ENCODE measurements at regions of chr19 and their contacts with region 1.

Region 1: GRCh38 chr19:10000171-10000826 is 10.0 kb downstream of the COL5A3 start:
- DNase-seq: peak; percentile 89
- H3K4me3 ChIP-seq: no peak overlapping the region
- H3K27ac ChIP-seq: no peak overlapping the region
- H3K4me1 ChIP-seq: no peaks in the 10 kb centered on the region; a peak in 1 of 4 replicates
- H3K27me3 ChIP-seq: peaks cover 24% of the 10 kb centered on the region
- CTCF ChIP-seq: peak; percentile 87
- EP300 ChIP-seq: no peak
- RAD21 ChIP-seq: peak; percentile 78

Region 2: DNA sequence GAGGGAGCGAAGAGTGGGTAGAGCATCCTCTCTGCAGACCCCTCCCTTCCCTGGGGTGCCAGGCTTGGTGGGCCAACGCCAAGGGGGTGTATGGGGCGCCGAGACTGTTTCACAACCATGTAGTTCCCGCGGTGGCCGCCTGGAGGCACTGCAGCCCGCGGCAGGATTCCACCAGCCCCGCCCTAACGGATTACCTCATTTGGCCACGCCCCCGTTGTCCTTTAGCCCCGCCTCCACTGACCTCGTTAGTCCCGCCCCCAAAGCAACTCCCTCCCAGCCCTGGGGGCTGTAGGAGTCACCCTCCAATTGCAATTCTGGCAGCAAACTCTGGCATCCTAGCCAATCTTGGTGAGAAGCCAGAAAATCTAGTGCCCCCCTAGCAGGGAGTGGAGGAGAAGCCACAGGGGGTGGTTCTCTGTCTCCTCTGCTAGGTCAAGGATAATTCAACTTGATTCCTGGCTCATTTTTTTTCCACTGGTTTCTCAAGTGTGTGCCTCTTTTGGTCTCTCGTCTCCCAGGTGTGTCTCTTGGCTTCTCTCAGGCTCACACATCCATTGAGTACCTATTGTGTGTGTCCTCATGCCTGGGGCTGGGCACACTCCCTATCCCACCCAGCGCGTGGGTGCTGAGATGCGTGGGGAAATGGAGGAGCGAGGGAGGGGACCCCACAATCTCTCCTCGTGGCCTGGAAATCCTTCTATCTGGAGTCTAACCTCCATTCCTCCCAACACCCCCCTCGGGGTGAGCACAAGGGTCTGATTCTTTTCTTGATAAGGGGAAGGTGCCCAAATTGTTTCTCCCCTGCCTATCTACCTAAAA is 66.0 kb before region 1 on chr19:
- CTCF ChIA-PET with region 1: interaction called, 57 read pairs
- POLR2A ChIA-PET with region 1: no interaction called
- DNase-seq: peak; percentile 92
- H3K4me3 ChIP-seq: peak overlapping the region in 1 of 2 experiments; percentile 30; a peak in 2 of 4 replicates
- H3K27ac ChIP-seq: no peak overlapping the region
- H3K4me1 ChIP-seq: peaks cover 5 to 17% of the 10 kb centered on the region in 2 experiments; a peak in 3 of 4 replicates
- H3K27me3 ChIP-seq: peaks cover 23% of the 10 kb centered on the region; the same call in 1 of the 2 replicates
- CTCF ChIP-seq: peak; percentile 95
- EP300 ChIP-seq: no peak
- RAD21 ChIP-seq: peak; percentile 86

Region 3: GRCh38 chr19:9945319-9945966 is 54.9 kb before region 1 on chr19:
- CTCF ChIA-PET with region 1: interaction called, 14 read pairs
- POLR2A ChIA-PET with region 1: no interaction called
- DNase-seq: peak; percentile 78
- H3K4me3 ChIP-seq: no peak overlapping the region
- H3K27ac ChIP-seq: peak overlapping the region; percentile 22 to 98
- H3K4me1 ChIP-seq: peaks cover 8 to 10% of the 10 kb centered on the region in 2 experiments; a peak in 2 of 4 replicates
- H3K27me3 ChIP-seq: no peaks in the 10 kb centered on the region
- CTCF ChIP-seq: peak; percentile 53
- EP300 ChIP-seq: peak; percentile 53 to 73; a peak in 3 of 4 replicates
- RAD21 ChIP-seq: no peak

Region 4: GRCh38 chr19:9981406-9982260 is 18.7 kb before region 1 on chr19:
- CTCF ChIA-PET with region 1: interaction called, 32 read pairs
- POLR2A ChIA-PET with region 1: no interaction called
- DNase-seq: no peak
- H3K4me3 ChIP-seq: no peak overlapping the region
- H3K27ac ChIP-seq: no peak overlapping the region
- H3K4me1 ChIP-seq: no peaks in the 10 kb centered on the region
- H3K27me3 ChIP-seq: peaks cover 23% of the 10 kb centered on the region
- CTCF ChIP-seq: no peak
- EP300 ChIP-seq: no peak
- RAD21 ChIP-seq: no peak

Region 5: DNA sequence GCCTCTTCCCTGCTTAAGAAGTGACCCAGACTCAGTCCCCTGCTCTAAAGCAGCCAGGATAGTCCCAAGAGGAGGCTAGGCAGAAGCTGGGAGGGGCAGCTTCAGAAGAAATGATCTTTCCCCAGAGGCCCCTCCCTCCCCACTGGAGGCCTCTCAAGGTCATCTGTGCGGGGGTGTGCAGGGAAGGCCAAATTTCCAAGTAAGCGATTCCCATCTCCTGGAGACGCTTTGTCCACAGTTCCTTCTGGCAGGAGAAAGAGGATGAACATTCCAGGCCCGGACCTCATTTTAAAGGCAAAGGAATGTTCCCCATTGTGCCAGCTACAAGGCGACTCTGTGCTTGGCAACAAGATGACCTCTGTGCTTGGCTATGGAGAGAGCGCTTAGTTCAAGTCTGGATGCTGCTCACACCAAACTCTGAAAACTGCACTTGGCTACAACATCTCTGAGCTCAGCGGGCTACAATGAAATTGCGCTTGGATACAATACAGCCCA is 13.5 kb before region 1 on chr19:
- CTCF ChIA-PET with region 1: interaction called, 32 read pairs
- POLR2A ChIA-PET with region 1: no interaction called
- DNase-seq: no peak
- H3K4me3 ChIP-seq: no peak overlapping the region
- H3K27ac ChIP-seq: no peak overlapping the region
- H3K4me1 ChIP-seq: no peaks in the 10 kb centered on the region
- H3K27me3 ChIP-seq: peaks cover 37% of the 10 kb centered on the region
- CTCF ChIP-seq: no peak
- EP300 ChIP-seq: no peak
- RAD21 ChIP-seq: no peak

Region 6: DNA sequence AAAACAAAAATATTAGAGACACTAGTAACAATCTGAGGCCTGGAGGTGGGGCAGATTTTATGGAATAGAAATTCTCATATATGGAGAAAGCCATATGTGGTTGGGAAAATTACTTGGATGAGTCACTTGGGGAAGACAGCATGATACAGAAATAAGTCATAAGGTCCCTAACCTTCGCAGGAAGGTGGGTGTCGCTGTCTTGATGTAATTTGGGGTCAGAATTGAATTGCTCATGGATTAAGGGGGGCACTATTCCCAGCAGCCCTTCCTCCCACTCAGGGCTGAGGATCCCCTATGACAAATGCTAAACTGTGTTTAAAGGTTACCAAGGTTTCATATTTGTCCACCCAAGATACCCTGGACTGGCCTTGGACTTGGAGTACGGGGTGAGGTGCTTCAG is 18.0 kb after region 1 on chr19:
- CTCF ChIA-PET with region 1: interaction called, 21 read pairs
- POLR2A ChIA-PET with region 1: no interaction called
- DNase-seq: no peak
- H3K4me3 ChIP-seq: no peak overlapping the region
- H3K27ac ChIP-seq: no peak overlapping the region
- H3K4me1 ChIP-seq: no peaks in the 10 kb centered on the region
- H3K27me3 ChIP-seq: peaks cover 23% of the 10 kb centered on the region; the same call in 1 of the 2 replicates
- CTCF ChIP-seq: no peak
- EP300 ChIP-seq: no peak
- RAD21 ChIP-seq: no peak

Region 7: GRCh38 chr19:10219678-10220077 is 219.4 kb after region 1 on chr19:
- CTCF ChIA-PET with region 1: no interaction called
- POLR2A ChIA-PET with region 1: no interaction called
- DNase-seq: no peak
- H3K4me3 ChIP-seq: no peak overlapping the region
- H3K27ac ChIP-seq: no peak overlapping the region
- H3K4me1 ChIP-seq: no peaks in the 10 kb centered on the region
- H3K27me3 ChIP-seq: no peaks in the 10 kb centered on the region
- CTCF ChIP-seq: no peak; the same call in 1 of the 2 replicates
- EP300 ChIP-seq: no peak
- RAD21 ChIP-seq: no peak